ENCODE measurements at regions of chr1 and their contacts with region 1.

Region 1: GRCh38 chr1:230310381-230311163 is 115.6 kb downstream of the PGBD5 start:
- DNase-seq: peak; percentile 51
- H3K4me3 ChIP-seq: no peak overlapping the region
- H3K27ac ChIP-seq: no peak overlapping the region
- H3K4me1 ChIP-seq: peaks cover 13% of the 10 kb centered on the region
- H3K27me3 ChIP-seq: no peaks in the 10 kb centered on the region
- CTCF ChIP-seq: peak; percentile 85 to 94

Region 2: DNA sequence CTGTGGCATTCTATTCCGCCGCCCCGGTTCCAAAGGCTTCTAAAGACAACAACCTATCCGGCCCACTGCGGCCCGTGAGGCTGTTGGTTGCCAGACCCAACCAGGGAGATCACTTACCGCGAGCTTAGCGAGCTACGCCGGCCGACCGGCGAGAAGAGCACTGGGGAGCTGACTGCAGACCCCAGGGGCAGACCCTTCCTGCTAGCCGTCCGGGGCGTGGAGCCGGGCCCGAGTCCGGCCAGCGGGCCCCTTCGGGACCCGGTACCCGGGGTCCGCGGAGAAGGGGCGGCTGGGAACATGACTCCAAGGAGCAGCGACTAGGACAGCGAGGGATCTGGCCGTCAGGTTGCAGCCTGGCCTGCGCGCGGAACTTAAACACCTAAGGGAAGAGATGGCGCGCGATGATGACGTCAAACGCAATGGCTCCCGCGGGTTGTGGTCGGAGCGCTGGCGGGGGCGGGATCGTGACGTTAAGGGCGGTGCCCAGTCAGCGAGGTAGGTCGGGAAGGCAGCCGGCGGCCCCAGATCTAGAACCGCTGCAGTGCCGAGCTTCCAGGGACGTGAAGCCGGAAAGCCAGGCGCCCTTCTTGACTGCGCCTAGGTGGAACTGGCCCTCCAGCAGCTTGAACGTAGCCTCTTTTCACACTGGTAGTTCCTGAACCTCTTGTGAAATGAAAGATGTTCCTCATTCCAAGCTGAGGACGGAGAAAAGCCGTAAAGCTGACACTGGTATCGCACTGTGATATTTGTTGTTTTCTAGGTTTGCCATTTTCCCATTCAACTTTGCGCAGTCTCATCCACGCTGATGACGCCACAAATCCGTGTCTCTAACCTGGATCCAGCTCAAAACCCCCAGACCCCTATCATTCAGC is 802.4 kb before region 1 on chr1 and contains the start of gene NUP133:
- CTCF ChIA-PET with region 1: no interaction called
- dilution Hi-C with region 1: no loop called
- in situ Hi-C with region 1: no loop called
- intact Hi-C with region 1: loop called (anchors 2 kb)
- DNase-seq: peak; percentile 97
- H3K4me3 ChIP-seq: peak within 1 kb of the TSS; percentile 85 to 96 (median 90)
- H3K27ac ChIP-seq: peak within 1 kb of the TSS; percentile 90
- H3K4me1 ChIP-seq: peaks cover 19% of the 10 kb centered on the region
- H3K27me3 ChIP-seq: no peaks in the 10 kb centered on the region
- CTCF ChIP-seq: no peak
- total RNA-seq, gene NUP133: 28.8 to 34.8 TPM

Region 3: DNA sequence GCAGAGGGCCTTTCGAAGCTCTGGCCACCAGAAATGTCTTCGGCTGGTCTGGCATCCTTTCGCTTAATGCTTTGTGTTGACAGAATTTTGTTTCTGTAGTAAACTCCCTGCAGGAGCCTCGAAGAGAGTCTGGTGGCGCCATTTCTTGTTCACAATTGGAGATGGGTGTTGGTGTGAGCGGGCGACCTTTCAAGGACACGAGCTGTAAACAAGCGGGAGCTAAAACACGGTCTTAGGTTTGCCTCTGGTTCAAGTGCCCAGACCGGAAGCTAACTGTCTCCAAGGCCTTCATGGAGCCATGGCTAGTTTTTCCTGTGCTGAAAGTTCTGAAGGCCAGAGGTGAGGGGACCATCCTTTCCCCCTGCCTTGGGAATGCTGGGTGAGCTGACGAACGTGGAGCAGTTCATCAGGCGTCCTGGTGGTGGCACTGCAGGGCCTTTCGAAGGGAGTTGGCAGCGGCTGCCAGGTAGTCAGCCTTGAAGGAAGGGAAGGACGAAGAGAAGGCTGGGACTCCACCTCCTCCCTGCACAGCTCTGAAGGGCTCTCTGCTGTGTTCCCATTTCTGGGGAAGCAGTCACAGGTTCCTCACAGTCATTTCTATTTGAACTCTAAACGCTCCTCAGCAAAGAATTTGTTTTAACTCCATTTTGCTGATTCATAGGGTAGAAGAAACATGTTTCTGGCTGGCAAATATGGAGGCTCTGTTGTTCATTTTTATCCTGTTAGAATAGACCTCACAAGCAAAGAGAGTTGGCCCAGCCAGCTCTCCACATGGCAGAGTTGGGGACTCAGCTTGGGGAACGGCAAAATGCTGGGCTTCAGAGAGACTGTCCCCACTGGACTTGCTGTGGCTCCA is 649.3 kb before region 1 on chr1:
- CTCF ChIA-PET with region 1: no interaction called
- dilution Hi-C with region 1: no loop called
- in situ Hi-C with region 1: loop called (anchors 25 kb)
- intact Hi-C with region 1: loop called (anchors 1 kb)
- DNase-seq: peak; percentile 51
- H3K4me3 ChIP-seq: no peak overlapping the region
- H3K27ac ChIP-seq: no peak overlapping the region
- H3K4me1 ChIP-seq: peaks cover 8% of the 10 kb centered on the region
- H3K27me3 ChIP-seq: no peaks in the 10 kb centered on the region
- CTCF ChIP-seq: peak; percentile 87 to 96

Region 4: DNA sequence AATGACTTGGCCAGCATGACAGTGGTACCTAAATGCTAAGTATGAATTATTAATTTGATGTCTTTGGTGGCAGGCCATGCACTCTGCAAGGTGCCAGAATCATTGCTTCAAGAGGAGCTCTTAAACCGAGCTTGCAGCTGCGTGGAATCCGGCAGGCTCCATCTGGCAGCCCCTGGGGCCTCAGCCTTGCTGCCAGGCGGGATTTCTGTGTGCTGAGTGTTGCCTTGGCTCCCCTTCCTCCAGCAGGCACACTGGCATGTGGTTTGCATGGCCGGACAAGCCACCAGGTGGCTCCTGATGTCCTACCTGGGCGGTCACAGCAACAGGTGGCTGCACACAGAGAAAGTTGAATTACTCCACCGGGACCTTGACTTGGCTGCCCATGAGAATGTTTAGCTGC is 529.1 kb before region 1 on chr1:
- CTCF ChIA-PET with region 1: no interaction called
- dilution Hi-C with region 1: no loop called
- in situ Hi-C with region 1: no loop called
- intact Hi-C with region 1: loop called (anchors 1 kb)
- DNase-seq: no peak
- H3K4me3 ChIP-seq: no peak overlapping the region
- H3K27ac ChIP-seq: no peak overlapping the region
- H3K4me1 ChIP-seq: no peaks in the 10 kb centered on the region
- H3K27me3 ChIP-seq: no peaks in the 10 kb centered on the region
- CTCF ChIP-seq: peak in 1 of 2 donors; percentile 53

Region 5: DNA sequence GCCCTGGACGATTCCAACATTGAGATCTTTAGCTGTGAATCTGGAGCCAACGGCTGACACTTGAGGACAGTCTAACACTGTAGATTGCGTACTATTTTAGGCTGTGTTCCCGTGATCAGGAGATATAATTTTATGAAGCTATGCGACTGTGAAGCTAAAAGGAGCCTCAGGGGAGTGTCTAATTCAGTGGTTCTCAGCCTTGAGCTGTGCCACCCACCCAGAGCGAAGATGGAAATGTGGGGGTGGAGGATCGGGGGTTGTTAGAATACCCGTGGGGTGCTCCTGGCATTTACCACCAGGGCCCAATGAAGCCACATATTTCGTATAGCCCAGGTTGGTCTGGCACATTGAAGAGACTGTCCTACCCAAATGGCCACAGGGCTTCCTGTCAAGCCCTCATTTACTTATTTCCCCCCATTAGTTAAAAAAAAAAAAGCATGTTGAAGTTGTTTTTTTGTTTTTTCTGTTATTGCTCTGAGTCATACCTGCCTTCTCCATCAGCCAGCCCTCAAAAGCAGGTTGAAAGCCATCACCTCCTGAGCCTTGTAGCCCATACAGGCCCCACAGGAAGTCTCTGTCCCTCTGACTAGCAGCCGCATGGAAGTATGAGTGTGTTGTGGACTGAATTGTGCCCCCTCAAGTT is 101.8 kb before region 1 on chr1:
- CTCF ChIA-PET with region 1: no interaction called
- dilution Hi-C with region 1: no loop called
- in situ Hi-C with region 1: no loop called
- intact Hi-C with region 1: no loop called
- DNase-seq: no peak
- H3K4me3 ChIP-seq: no peak overlapping the region
- H3K27ac ChIP-seq: no peak overlapping the region
- H3K4me1 ChIP-seq: peaks cover 20% of the 10 kb centered on the region
- H3K27me3 ChIP-seq: no peaks in the 10 kb centered on the region
- CTCF ChIP-seq: no peak

Region 6: GRCh38 chr1:230350208-230350921 is 39.8 kb after region 1 on chr1:
- CTCF ChIA-PET with region 1: no interaction called
- dilution Hi-C with region 1: no loop called
- in situ Hi-C with region 1: no loop called
- intact Hi-C with region 1: no loop called
- DNase-seq: no peak
- H3K4me3 ChIP-seq: no peak overlapping the region
- H3K27ac ChIP-seq: no peak overlapping the region
- H3K4me1 ChIP-seq: no peaks in the 10 kb centered on the region
- H3K27me3 ChIP-seq: peaks cover 1% of the 10 kb centered on the region
- CTCF ChIP-seq: no peak

Measured in mammary epithelial cell (primary cell).